Aorta (tissue), 5 donors: ENCODE measurements at regions of chr2 and their contacts with region 1.

Region 1: GRCh38 chr2:74833418-74834233 is at the start of gene HK2:
- DNase-seq: peak; percentile 93 to 95
- ATAC-seq: peak; percentile 95
- H3K4me3 ChIP-seq: peak within 1 kb of the TSS; percentile 46 to 51
- H3K27ac ChIP-seq: peak within 1 kb of the TSS in 1 of 2 donors; percentile 54
- H3K4me1 ChIP-seq: peaks cover 0 to 5% of the 10 kb centered on the region in 2 donors
- H3K27me3 ChIP-seq: no peaks in the 10 kb centered on the region
- total RNA-seq, gene HK2: 23.5 to 26.4 TPM

Region 2: DNA sequence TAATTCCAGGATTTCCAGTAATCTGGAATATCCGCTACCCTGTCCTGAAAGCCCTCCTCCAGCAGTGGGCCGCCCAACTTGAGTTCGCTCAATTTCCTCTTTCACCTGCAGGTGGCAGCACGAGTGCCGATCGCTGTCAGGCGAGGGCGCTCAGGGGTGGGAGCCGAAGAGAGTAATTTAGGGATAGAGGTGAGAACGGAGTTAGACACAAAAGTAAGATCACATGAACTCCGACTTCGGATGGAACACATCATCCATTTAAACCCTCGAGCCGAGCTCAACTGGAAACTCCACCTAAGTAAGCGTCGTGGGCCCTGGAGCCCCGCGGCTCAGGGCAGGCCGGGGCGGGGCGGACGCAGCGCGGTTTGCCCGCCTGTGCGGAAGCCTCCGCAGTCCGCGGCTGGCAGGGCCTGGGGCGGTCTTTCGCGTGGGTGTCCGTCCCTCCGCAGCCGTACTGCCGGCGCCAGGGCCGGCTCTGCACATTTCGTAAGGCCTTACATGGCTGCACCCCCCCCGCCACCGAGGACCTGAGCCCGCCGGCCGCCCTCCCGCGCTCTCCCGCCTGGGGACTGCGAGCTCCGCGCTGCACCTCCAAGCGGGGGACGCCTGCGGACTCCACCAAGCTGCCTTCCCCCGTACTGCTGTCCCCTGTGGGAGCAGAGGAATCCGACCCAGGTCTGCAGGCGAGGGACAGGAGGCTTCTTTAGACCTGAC is 118.4 kb before region 1 on chr2:
- intact Hi-C with region 1: loop called (anchors 2 kb)
- DNase-seq: peak; percentile 86 to 94
- ATAC-seq: peak; percentile 95
- H3K4me3 ChIP-seq: peak overlapping the region; percentile 31 to 32
- H3K27ac ChIP-seq: peak overlapping the region in 1 of 2 donors; percentile 11
- H3K4me1 ChIP-seq: no peaks in the 10 kb centered on the region
- H3K27me3 ChIP-seq: no peaks in the 10 kb centered on the region

Region 3: GRCh38 chr2:74768401-74768914 is 65.2 kb before region 1 on chr2:
- intact Hi-C with region 1: loop called in 1 of 2 experiments (anchors 2 kb)
- DNase-seq: peak; percentile 58 to 82
- ATAC-seq: peak; percentile 63
- H3K4me3 ChIP-seq: no peak overlapping the region
- H3K27ac ChIP-seq: peak overlapping the region; percentile 54 to 96
- H3K4me1 ChIP-seq: peaks cover 0 to 2% of the 10 kb centered on the region in 2 donors
- H3K27me3 ChIP-seq: no peaks in the 10 kb centered on the region

Region 4: GRCh38 chr2:74856004-74856578 is 22.5 kb after region 1 on chr2:
- intact Hi-C with region 1: no loop called
- DNase-seq: peak in 1 of 2 donors; percentile 34
- ATAC-seq: no peak
- H3K4me3 ChIP-seq: no peak overlapping the region
- H3K27ac ChIP-seq: no peak overlapping the region
- H3K4me1 ChIP-seq: no peaks in the 10 kb centered on the region
- H3K27me3 ChIP-seq: no peaks in the 10 kb centered on the region

Region 5: DNA sequence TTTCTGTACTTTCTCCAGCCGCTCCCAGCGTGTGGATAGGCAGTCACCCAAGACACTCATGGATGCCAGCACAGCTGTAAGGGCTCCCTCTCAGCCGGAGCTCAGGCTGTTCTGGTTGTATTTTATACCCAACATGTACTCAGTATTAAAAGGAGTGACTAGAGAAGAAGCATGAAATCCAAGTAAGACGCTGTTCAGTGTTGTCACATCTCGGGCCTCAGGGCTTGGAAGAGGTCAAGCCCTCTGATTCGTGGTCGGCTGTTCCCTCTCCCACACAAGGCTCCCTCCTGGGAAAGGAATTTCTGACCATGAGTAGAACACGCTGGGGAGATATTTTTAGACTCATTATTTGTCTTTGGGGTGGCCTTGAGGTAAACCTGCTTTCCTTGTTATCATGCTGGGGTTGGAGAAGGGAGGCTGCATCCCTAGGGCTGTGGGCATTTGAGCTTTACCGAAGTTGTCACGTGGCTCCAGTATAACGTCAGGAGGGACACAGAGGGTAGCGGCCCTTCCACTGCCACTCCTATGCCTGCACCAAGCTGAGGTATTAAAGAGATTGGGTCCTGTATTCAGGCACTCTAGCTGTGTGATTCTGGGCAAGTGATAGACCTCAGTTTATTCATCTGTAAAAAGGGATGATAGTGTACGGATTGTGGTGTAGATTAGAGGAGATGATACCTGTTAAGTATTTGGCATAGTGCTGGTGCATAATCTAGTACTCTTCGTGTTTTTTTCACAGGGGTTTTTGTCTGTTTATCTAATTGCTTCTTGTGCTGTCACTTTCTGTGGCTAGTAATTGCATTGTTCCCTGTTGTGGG is 34.4 kb after region 1 on chr2:
- intact Hi-C with region 1: loop called (anchors 2 to 5 kb)
- DNase-seq: no peak
- ATAC-seq: peak; percentile 72
- H3K4me3 ChIP-seq: no peak overlapping the region
- H3K27ac ChIP-seq: peak overlapping the region; percentile 3 to 72
- H3K4me1 ChIP-seq: no peaks in the 10 kb centered on the region
- H3K27me3 ChIP-seq: no peaks in the 10 kb centered on the region

Region 6: GRCh38 chr2:74876081-74876886 is 42.7 kb after region 1 on chr2:
- intact Hi-C with region 1: loop called in 1 of 2 experiments (anchors 5 kb)
- DNase-seq: no peak
- ATAC-seq: peak; percentile 83
- H3K4me3 ChIP-seq: no peak overlapping the region
- H3K27ac ChIP-seq: no peak overlapping the region
- H3K4me1 ChIP-seq: no peaks in the 10 kb centered on the region
- H3K27me3 ChIP-seq: no peaks in the 10 kb centered on the region